ENCODE measurements at regions of chr5 and their contacts with region 1.

Region 1: GRCh38 chr5:146426853-146427618 is 20.1 kb upstream of the TCERG1 start:
- DNase-seq: peak; percentile 5
- H3K4me3 Mint-ChIP-seq: no peak overlapping the region
- H3K27ac Mint-ChIP-seq: no peak overlapping the region
- H3K4me1 Mint-ChIP-seq: peaks cover 4% of the 10 kb centered on the region
- H3K27me3 Mint-ChIP-seq: peaks cover 9% of the 10 kb centered on the region

Region 2: DNA sequence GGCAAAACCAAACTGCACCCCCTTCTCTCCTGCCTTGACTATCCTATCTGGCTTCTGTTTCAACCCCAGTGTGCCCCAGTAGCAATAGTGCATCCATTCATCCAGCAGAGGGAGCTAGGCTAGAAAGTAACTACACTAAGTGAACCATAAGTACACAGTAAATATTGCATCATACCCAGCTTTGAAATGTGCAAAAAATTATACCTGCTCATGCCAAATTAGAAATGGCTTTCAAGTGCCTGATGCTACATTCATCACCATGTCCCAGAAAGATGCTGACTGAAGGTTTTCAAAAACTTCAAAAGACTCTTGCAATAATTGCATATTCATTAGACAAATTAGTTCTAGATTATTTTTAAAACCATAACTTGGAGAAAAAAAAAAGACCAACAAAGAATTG is 745.4 kb before region 1 on chr5:
- CTCF ChIA-PET with region 1: no interaction called
- intact Hi-C with region 1: loop called (anchors 1 kb)
- DNase-seq: peak; percentile 62
- H3K4me3 Mint-ChIP-seq: no peak overlapping the region
- H3K27ac Mint-ChIP-seq: no peak overlapping the region
- H3K4me1 Mint-ChIP-seq: no peaks in the 10 kb centered on the region
- H3K27me3 Mint-ChIP-seq: no peaks in the 10 kb centered on the region

Region 3: DNA sequence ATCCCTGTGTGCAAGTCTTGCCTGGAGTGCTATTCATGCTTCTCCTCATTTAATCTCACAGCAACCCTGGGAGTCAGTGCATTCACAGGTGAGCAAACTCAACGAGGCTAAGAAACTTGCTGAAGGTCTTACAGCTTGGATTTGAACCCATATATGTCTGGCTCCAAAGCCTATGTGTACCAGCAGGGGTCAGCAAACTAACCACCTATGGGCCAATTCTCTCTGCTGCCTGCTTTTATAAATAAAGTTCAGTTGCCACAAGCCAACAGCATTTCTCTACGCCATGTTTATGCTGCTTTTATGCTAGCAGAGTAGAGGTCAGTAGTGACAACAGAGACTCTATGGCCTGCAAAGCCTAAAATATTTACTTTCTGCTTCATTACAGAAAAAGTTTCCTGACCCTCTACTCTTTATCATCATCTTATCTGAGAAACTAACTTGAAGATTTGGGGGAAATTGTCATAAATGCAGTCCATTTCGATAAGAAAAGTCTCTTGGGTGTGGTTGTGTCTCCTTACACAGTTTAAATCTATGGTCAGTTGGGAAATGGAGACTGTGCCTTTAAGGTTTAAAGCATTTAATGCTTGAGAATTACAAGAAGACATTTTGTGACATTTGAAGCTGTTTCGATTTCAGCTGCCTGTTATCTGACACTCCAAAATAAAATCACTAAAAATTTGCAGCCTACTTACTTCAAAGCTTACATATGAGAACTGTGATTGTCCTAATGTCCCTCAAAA is 729.6 kb before region 1 on chr5:
- CTCF ChIA-PET with region 1: no interaction called
- intact Hi-C with region 1: loop called (anchors 5 kb)
- DNase-seq: peak; percentile 29
- H3K4me3 Mint-ChIP-seq: no peak overlapping the region
- H3K27ac Mint-ChIP-seq: no peak overlapping the region
- H3K4me1 Mint-ChIP-seq: no peaks in the 10 kb centered on the region
- H3K27me3 Mint-ChIP-seq: no peaks in the 10 kb centered on the region

Region 4: GRCh38 chr5:146291421-146292074 is 135.5 kb before region 1 on chr5:
- CTCF ChIA-PET with region 1: interaction called, 9 read pairs
- intact Hi-C with region 1: loop called (anchors 1 kb)
- DNase-seq: peak; percentile 10
- H3K4me3 Mint-ChIP-seq: no peak overlapping the region
- H3K27ac Mint-ChIP-seq: no peak overlapping the region
- H3K4me1 Mint-ChIP-seq: no peaks in the 10 kb centered on the region
- H3K27me3 Mint-ChIP-seq: no peaks in the 10 kb centered on the region